H1 (cell line): ENCODE measurements at regions of chr12 and their contacts with region 1.

Region 1: GRCh38 chr12:118404876-118405521 is 28.6 kb downstream of the SUDS3 start:
- DNase-seq: peak in 1 of 2 experiments; percentile 73
- H3K4me3 ChIP-seq: no peak overlapping the region
- H3K27ac ChIP-seq: no peak overlapping the region
- H3K4me1 ChIP-seq: no peaks in the 10 kb centered on the region
- H3K27me3 ChIP-seq: no peaks in the 10 kb centered on the region
- CTCF ChIP-seq: peak in 2 of 3 experiments; percentile 55 to 70; a peak in 2 of 4 replicates
- EP300 ChIP-seq: no peak
- POLR2A ChIP-seq: no peak
- RAD21 ChIP-seq: peak; percentile 81 to 84

Region 2: DNA sequence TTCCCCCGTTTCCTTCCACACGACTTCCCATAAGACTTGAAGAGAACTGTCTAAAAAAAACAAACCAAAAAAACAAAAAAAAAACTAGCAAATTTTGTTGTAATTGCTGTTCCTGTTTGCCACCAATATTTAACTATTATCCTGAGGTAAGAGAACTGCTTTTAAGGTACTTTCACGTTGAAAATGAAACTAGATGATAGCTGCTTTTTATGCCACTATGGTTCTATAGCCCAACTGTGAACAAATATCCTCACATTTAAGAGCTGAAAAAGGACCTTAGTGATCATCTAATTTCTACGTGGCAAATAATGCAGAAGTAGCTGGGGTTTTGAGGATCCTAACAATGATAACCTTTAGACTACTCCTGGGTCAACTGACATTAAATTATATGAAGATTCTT is 130.9 kb before region 1 on chr12:
- CTCF ChIA-PET with region 1: no interaction called
- POLR2A ChIA-PET with region 1: no interaction called
- DNase-seq: no peak
- H3K4me3 ChIP-seq: no peak overlapping the region
- H3K27ac ChIP-seq: no peak overlapping the region
- H3K4me1 ChIP-seq: no peaks in the 10 kb centered on the region
- H3K27me3 ChIP-seq: no peaks in the 10 kb centered on the region
- CTCF ChIP-seq: no peak
- EP300 ChIP-seq: no peak
- POLR2A ChIP-seq: no peak
- RAD21 ChIP-seq: no peak

Region 3: DNA sequence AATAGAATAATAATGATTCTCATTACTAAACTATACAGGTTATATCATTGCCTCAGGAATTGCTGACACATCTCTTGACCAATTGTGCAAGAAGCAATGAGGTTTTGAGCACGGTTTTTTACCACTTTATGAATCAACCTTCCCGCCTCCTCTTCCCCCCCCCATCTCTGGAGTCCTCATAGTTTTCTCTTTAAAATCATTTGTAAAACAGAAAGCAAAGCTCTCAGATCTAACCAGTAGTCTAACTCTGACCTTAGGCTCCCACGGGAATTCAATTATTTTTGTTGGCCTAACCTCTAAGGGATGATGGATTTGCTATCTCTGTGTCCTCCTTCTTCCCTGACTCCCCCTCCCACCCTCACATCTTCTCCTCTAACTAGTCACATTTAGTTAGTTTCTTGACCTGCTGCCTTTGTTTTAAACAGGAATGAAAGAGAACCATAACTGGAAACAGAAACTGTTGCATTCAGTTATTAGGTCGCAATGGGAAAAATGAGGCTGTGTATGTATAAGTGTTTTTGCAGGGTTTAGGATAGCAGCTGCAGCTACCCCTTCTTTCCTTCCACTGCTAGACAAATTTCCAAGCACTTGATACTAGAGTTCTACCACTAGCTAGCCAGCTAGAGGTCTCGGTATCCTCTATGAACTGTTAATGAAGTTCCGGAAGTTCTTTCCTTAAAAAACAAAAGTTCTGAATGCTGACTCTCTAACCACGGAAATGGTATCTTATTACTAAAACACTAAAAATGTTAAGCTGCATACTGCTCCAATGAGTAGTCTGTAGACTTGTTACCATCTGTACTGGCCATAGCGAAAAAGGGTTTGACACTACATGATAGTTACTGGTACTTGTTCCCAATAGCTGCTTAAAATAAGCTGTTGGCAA is 97.7 kb before region 1 on chr12:
- CTCF ChIA-PET with region 1: no interaction called
- POLR2A ChIA-PET with region 1: no interaction called
- DNase-seq: no peak
- H3K4me3 ChIP-seq: no peak overlapping the region
- H3K27ac ChIP-seq: no peak overlapping the region
- H3K4me1 ChIP-seq: no peaks in the 10 kb centered on the region
- H3K27me3 ChIP-seq: no peaks in the 10 kb centered on the region
- CTCF ChIP-seq: no peak
- EP300 ChIP-seq: no peak
- POLR2A ChIP-seq: no peak
- RAD21 ChIP-seq: no peak

Region 4: GRCh38 chr12:118418385-118419057 is 13.5 kb after region 1 on chr12:
- CTCF ChIA-PET with region 1: interaction called, 14 read pairs
- POLR2A ChIA-PET with region 1: interaction called, 4 read pairs
- DNase-seq: no peak
- H3K4me3 ChIP-seq: no peak overlapping the region
- H3K27ac ChIP-seq: no peak overlapping the region
- H3K4me1 ChIP-seq: no peaks in the 10 kb centered on the region
- H3K27me3 ChIP-seq: peaks cover 0 to 1% (median 0%) of the 10 kb centered on the region in 4 experiments; a peak in 1 of 7 replicates
- CTCF ChIP-seq: no peak
- EP300 ChIP-seq: no peak
- POLR2A ChIP-seq: no peak
- RAD21 ChIP-seq: no peak

Region 5: GRCh38 chr12:118424906-118425305 is 19.9 kb after region 1 on chr12:
- CTCF ChIA-PET with region 1: interaction called, 17 read pairs
- POLR2A ChIA-PET with region 1: interaction called, 4 read pairs
- DNase-seq: no peak
- H3K4me3 ChIP-seq: no peak overlapping the region
- H3K27ac ChIP-seq: no peak overlapping the region
- H3K4me1 ChIP-seq: peaks cover 0 to 4% (median 0%) of the 10 kb centered on the region in 4 experiments; a peak in 2 of 7 replicates
- H3K27me3 ChIP-seq: no peaks in the 10 kb centered on the region
- CTCF ChIP-seq: no peak
- EP300 ChIP-seq: no peak
- POLR2A ChIP-seq: no peak
- RAD21 ChIP-seq: no peak

Region 6: GRCh38 chr12:118488034-118488433 is 83.0 kb after region 1 on chr12:
- CTCF ChIA-PET with region 1: no interaction called
- POLR2A ChIA-PET with region 1: no interaction called
- DNase-seq: no peak
- H3K4me3 ChIP-seq: no peak overlapping the region
- H3K27ac ChIP-seq: no peak overlapping the region
- H3K4me1 ChIP-seq: no peaks in the 10 kb centered on the region; a peak in 1 of 7 replicates
- H3K27me3 ChIP-seq: no peaks in the 10 kb centered on the region
- CTCF ChIP-seq: no peak
- EP300 ChIP-seq: no peak
- POLR2A ChIP-seq: no peak
- RAD21 ChIP-seq: no peak